Posterior vena cava (tissue), 2 donors: ENCODE measurements at regions of chr14 and their contacts with region 1.

Region 1: DNA sequence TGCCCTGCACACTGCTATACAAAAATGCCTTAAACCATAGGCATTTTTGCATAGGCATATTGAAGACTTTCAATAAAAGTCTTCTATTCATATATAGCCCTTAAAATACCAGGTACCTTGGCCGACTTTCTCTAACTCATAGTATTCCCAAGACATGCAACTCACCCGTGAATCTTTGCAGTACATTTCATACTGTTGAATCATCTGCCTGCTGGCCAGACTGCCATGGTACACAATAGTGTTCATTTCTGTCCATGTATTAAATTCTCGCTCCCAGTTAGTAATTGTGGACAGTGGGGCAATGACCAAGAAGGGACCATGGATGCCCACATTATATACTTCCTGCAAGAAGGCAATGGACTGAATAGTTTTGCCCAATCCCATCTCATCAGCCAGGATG is 24.3 kb upstream of the SUPT16H start:
- DNase-seq: no peak

Region 2: DNA sequence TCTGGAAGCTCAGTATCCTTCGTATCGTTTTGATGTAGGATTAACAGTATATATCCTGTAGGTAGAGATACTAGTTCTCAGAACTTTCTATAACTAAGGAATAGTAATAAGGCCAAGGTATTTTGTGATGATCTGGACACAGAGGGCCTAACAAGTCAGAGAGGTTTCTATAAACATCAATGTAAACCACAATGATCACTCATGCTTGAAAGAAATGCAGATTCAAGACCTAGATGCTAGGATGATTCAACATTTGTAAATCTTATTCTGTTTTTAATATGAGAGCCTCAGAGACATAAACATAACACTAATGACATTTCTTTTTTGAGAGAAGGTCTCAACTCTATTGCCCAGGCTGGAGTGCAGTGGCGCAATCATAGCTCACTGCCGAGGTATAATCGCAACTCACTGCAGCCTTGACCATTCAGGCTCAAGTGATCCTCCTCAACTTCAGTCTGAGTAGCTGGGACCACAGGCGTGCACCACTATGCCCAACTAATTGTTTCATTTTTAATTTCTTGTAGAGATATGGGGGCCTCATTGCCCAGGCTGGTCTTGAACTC is 40.5 kb before region 1 on chr14:
- intact Hi-C with region 1: loop called in 1 of 2 experiments (anchors 1 kb)
- DNase-seq: no peak

Region 3: DNA sequence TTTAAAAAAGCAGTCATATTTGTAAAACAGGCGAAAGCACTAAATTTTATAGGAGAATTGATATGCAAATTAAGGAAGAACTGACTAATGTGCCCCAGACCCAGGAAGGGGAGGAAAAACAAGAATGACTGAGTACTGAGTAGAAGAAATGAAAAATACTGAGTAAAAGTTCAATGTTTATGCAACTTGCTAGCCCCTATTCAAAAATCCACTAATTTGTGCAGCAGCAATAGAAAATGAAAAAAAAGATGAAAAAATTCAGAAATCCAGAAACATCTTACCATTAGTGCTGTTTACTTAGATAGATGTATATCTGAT is 41.7 kb after region 1 on chr14:
- intact Hi-C with region 1: no loop called
- DNase-seq: no peak